Activated CD8-positive, alpha-beta T cell treated with anti-CD3 and anti-CD28 coated beads for 36 hours (primary cell): ENCODE measurements at regions of chr4 and their contacts with region 1.

Region 1: DNA sequence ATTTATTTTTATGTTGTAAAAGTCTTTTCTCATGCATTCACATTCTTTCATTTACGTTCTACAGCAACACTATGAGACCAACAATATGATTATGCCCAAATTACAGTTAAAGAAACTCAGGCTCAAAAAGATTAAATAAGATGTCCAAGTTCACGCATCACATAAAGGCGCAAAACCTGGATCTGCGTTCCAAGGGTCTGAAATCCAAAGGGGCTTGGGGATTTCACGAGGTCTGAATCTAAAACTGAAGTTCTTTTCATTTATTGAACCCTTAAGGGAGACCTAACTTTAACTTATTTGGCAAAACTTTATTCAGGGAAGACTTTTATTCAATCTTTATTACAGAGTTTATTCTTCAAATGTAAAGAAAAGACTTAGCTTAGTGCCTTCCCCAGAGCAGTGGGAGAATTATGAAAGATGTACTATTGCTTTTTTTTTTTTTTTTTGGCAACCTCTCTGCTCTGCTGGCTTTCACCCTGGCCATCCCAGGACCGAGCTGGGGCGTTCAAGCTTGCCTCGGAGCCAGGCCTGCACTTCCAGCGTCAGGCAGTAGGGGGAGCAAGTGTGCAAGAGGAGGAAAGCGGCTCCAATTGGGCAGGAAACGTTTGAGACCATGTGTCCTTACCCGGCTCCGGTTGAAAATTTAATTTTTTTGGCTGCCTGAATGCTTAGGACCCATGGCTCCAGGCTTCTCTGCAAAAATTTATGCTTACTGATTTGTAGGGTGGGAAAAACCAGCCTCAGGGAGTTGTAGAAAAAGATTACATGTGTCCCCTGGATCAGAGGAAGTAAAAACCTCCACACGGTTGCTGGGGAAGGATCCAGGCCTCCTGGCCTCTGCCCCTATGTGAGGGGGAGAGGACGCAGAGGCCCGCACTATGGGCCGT is 344.3 kb upstream of the KLF3 start:
- DNase-seq: peak; percentile 96
- ATAC-seq: peak; percentile 86
- H3K4me3 Mint-ChIP-seq: peak overlapping the region; percentile 76
- H3K27ac Mint-ChIP-seq: peak overlapping the region; percentile 89
- H3K4me1 Mint-ChIP-seq: peaks cover 39% of the 10 kb centered on the region
- H3K27me3 Mint-ChIP-seq: no peaks in the 10 kb centered on the region
- CTCF ChIP-seq: peak; percentile 96

Region 2: GRCh38 chr4:38062088-38062893 is 257.4 kb before region 1 on chr4:
- CTCF ChIA-PET with region 1: interaction called, 6 read pairs
- POLR2A ChIA-PET with region 1: no interaction called
- intact Hi-C with region 1: loop called (anchors 10 kb)
- DNase-seq: peak; percentile 78
- ATAC-seq: peak; percentile 62
- H3K4me3 Mint-ChIP-seq: peak overlapping the region; percentile 60
- H3K27ac Mint-ChIP-seq: peak overlapping the region; percentile 73
- H3K4me1 Mint-ChIP-seq: peaks cover 13% of the 10 kb centered on the region
- H3K27me3 Mint-ChIP-seq: no peaks in the 10 kb centered on the region
- CTCF ChIP-seq: peak; percentile 97

Region 3: DNA sequence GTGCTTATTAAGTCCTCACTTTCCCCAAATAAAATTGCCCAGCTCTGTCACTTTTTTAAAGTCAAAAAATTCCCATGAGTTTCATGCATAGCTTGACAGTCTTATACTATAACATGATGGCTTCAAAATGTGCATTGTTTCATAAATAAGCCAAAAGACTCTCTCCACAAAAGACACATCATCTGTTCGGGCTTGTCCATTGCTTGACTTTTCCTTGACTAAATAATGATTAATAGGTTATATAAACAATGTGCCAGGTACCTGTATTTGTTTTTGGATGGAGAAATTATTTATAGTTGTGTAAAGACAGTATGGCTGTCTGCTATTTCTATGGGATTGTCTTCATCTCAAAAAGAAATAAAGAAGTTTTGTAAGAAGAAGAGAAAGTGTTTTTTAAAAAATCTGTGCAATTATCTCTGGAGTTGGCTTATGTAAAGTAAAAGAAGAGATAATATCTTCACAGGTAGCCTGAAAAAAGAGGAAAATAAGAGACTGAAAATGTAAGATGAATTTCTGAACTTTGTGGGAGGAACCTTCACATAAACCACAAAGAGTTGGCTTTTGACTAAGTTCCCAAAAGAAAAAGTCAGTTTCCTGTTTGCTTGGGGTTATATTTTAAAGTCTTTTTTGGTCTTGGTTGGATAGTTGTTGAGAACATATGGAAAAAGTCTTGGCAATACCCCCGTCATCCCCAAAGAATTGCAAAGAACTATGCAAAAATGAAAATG is 15.3 kb after region 1 on chr4:
- CTCF ChIA-PET with region 1: interaction called, 32 read pairs
- POLR2A ChIA-PET with region 1: interaction called, 3 read pairs
- intact Hi-C with region 1: no loop called
- DNase-seq: no peak
- ATAC-seq: no peak
- H3K4me3 Mint-ChIP-seq: no peak overlapping the region
- H3K27ac Mint-ChIP-seq: no peak overlapping the region
- H3K4me1 Mint-ChIP-seq: peaks cover 38% of the 10 kb centered on the region
- H3K27me3 Mint-ChIP-seq: no peaks in the 10 kb centered on the region
- CTCF ChIP-seq: no peak

Region 4: DNA sequence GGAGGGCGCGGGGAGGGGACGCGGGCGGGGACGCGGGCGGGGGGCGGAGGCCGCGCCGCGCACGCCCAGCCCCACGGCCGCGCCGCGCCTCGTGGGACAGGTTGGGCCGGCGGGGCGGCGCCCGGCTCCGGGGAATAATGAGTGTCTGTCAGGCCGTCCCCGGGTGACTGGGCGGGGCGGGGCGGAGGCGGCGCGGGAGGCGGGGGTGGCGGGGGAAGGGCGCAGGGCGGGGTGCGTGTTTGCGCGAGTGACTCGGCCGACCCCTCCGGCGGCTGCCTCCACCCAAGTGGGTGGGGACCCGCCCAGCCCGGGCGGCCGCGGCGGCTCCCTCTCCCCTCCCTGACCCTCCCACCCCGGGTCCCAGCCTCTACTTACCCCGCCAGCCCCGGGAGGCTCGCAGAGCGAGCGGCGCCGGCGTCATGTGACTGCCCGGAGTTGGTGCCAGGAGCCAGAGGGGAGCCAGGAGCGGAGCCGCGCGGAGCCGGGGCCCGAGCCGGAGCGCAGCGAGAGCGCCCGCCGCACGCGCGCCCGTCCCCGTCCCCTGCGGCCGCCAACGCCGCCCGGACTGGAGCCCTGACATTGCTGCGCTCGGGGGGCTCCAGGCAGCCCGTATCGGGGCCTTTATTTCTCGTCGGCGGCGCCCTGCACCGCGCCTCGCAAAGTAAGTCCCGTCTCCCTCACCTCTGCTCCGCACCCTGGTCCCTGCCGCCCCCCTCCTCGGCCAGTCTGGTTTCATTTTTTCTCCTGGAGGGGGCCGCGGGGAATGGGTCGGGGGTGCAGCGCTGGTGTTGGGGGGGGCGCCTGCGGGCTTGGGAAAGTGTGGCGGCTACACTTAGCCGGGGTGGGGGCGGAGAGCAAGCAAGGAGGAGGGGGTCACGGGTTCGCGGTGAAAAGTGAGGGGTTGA is 344.4 kb after region 1 on chr4 and contains the start of gene KLF3:
- CTCF ChIA-PET with region 1: interaction called, 30 read pairs
- POLR2A ChIA-PET with region 1: interaction called, 4 read pairs
- intact Hi-C with region 1: loop called (anchors 5 kb)
- DNase-seq: peak; percentile 68
- ATAC-seq: peak; percentile 64
- H3K4me3 Mint-ChIP-seq: peak within 1 kb of the TSS; percentile 79
- H3K27ac Mint-ChIP-seq: peak within 1 kb of the TSS; percentile 89
- H3K4me1 Mint-ChIP-seq: peaks cover 63% of the 10 kb centered on the region
- H3K27me3 Mint-ChIP-seq: no peaks in the 10 kb centered on the region
- CTCF ChIP-seq: no peak
- total RNA-seq, gene KLF3: 5.5 to 6.0 TPM